Lower leg skin (tissue), 4 donors: ENCODE measurements at regions of chr15 and their contacts with region 1.

Region 1: GRCh38 chr15:68204776-68205557 is at the start of gene CALML4:
- DNase-seq: peak; percentile 64 to 96
- H3K4me3 ChIP-seq: no peak within 1 kb of the TSS
- CTCF ChIP-seq: no peak
- POLR2A ChIP-seq: no peak
- total RNA-seq, gene CALML4: 2.6 to 9.3 (median 4.6) TPM

Region 2: GRCh38 chr15:68511073-68511991 is 306.4 kb after region 1 on chr15:
- intact Hi-C with region 1: no loop called
- DNase-seq: peak; percentile 8 to 68
- H3K4me3 ChIP-seq: no peak overlapping the region
- CTCF ChIP-seq: no peak
- POLR2A ChIP-seq: no peak

Region 3: DNA sequence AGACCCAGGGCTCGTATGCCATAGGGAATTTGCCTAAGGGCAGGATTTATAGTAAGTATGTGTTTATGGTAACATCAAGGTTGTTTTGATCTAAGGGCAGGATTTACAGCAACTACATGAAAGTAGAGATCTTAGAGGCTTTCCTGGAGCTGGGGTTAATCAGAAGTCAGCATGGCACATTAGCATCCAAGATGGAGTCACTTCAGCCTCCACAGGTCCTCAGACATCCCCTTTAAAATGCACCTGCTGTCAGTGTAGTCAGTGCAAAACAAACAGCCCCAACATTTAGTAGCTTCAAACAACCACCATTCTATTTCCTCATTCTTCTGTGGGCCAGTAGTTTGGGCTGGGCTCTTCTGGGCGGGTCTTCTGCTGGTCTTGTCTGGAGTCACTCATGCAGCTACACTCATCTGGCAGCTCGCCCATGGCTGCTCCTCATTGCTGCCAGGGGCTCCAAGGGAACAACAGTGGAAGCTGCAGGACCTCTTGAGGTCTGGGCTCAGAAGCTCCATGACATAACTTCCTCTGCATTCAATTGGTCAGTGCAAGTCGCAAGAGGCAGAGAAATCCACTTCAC is 1792.8 kb after region 1 on chr15:
- intact Hi-C with region 1: loop called (anchors 5 kb)
- DNase-seq: peak; percentile 40 to 87
- H3K4me3 ChIP-seq: no peak overlapping the region
- CTCF ChIP-seq: no peak
- POLR2A ChIP-seq: no peak